ENCODE measurements at regions of chr7 and their contacts with region 1.

Region 1: DNA sequence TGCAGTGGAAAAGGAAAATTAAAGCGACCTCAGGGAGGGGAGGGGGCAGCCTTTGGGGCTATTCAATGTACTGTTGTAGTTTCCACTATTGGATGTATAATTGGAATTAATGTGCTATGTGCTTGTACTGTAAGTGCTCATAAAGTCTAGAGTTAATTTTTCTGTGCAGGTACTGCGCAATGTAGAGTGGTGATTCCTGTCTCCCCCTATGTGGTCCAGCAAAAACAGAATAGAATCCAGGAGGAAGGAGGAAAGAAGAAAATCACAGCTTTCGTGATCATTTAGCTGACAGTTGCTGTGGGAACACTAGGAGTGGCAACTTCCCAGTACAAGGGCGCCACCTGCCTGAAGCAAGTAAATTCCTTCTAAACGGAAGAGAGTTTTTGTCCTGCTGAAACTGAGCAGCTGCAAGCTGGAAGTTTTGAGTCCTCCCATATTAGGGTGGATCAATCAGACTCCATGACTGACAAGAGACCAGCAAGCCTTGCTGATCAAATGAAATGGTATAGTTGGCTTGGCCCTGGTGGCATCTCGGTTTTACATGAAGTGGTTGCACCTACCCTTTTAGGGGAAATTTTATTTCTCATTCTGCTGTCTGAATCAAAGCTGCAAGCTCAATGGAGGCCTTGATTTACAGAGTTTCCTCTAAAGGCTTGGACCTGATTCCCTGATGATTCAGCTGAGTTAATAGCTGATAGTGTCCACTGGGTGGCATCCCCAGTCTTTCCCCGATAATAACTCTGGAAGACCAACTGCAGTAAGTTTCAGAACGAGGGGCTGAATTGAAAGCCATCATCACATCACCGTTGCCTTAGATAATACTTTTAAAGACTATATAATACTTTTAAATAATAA is 299.8 kb downstream of the HGF start:
- DNase-seq: peak; percentile 73
- H3K4me3 Mint-ChIP-seq: no peak overlapping the region
- H3K27ac Mint-ChIP-seq: no peak overlapping the region
- H3K4me1 Mint-ChIP-seq: peaks cover 7% of the 10 kb centered on the region
- H3K27me3 Mint-ChIP-seq: no peaks in the 10 kb centered on the region
- CTCF ChIP-seq: peak; percentile 65

Region 2: DNA sequence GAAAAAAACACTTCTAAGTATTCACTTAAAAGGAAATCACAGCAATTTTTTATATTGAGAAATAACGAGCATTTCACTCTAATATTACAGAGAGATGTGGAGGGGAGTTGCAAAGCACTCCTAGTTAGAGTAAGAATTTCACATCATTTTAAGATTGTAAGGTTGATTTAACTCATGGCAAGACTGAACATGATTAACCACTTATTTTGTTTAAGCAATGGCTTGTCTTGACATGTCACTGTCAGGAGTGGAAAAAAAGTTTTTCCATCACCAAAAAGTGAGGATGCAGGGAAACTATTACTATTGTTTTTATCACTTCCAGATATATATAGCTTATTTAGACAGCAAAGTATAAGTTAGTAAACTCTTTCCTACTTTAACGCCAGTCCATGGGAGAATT is 804.6 kb before region 1 on chr7:
- CTCF ChIA-PET with region 1: interaction called, 11 read pairs
- POLR2A ChIA-PET with region 1: no interaction called
- intact Hi-C with region 1: no loop called
- DNase-seq: peak; percentile 27
- H3K4me3 Mint-ChIP-seq: no peak overlapping the region
- H3K27ac Mint-ChIP-seq: peak overlapping the region; percentile 16
- H3K4me1 Mint-ChIP-seq: peaks cover 6% of the 10 kb centered on the region
- H3K27me3 Mint-ChIP-seq: no peaks in the 10 kb centered on the region
- CTCF ChIP-seq: no peak

Region 3: DNA sequence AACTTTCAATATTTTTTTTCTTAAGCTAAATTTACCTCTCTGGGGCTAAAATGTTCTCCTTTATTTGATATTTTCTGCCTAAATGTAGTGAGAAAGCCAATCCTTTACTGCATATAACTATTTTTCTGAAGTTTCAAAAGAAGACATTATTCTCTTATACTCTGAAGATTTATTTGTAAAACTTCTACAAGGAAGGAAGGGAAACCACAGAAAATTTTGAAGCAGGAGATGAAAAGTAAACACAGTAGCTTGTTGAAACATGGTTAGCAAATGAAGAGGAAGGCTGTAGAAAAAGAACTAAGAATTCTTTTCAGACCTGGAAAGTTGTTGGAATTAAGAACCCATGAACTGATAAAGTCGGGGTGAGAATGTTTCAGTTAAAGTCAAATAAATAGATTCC is 30.5 kb before region 1 on chr7:
- CTCF ChIA-PET with region 1: no interaction called
- POLR2A ChIA-PET with region 1: no interaction called
- intact Hi-C with region 1: no loop called
- DNase-seq: no peak
- H3K4me3 Mint-ChIP-seq: no peak overlapping the region
- H3K27ac Mint-ChIP-seq: no peak overlapping the region
- H3K4me1 Mint-ChIP-seq: peaks cover 15% of the 10 kb centered on the region
- H3K27me3 Mint-ChIP-seq: no peaks in the 10 kb centered on the region
- CTCF ChIP-seq: no peak

Region 4: GRCh38 chr7:81457852-81458522 is 12.1 kb before region 1 on chr7:
- CTCF ChIA-PET with region 1: interaction called, 42 read pairs
- POLR2A ChIA-PET with region 1: interaction called, 4 read pairs
- intact Hi-C with region 1: no loop called
- DNase-seq: peak; percentile 37
- H3K4me3 Mint-ChIP-seq: no peak overlapping the region
- H3K27ac Mint-ChIP-seq: no peak overlapping the region
- H3K4me1 Mint-ChIP-seq: peaks cover 6% of the 10 kb centered on the region
- H3K27me3 Mint-ChIP-seq: no peaks in the 10 kb centered on the region
- CTCF ChIP-seq: peak; percentile 46

Measured in MCF 10A (cell line).